MCF 10A (cell line): ENCODE measurements at regions of chr4 and their contacts with region 1.

Region 1: GRCh38 chr4:76515975-76516843 is 81.2 kb downstream of the SHROOM3 start:
- DNase-seq: no peak
- H3K4me3 Mint-ChIP-seq: no peak overlapping the region
- H3K27ac Mint-ChIP-seq: no peak overlapping the region
- H3K4me1 Mint-ChIP-seq: peaks cover 4% of the 10 kb centered on the region
- H3K27me3 Mint-ChIP-seq: no peaks in the 10 kb centered on the region
- CTCF ChIP-seq: no peak

Region 2: GRCh38 chr4:76363556-76364290 is 152.5 kb before region 1 on chr4:
- CTCF ChIA-PET with region 1: no interaction called
- POLR2A ChIA-PET with region 1: no interaction called
- intact Hi-C with region 1: no loop called
- DNase-seq: no peak
- H3K4me3 Mint-ChIP-seq: no peak overlapping the region
- H3K27ac Mint-ChIP-seq: no peak overlapping the region
- H3K4me1 Mint-ChIP-seq: peaks cover 6% of the 10 kb centered on the region
- H3K27me3 Mint-ChIP-seq: no peaks in the 10 kb centered on the region
- CTCF ChIP-seq: no peak

Region 3: GRCh38 chr4:76640353-76640910 is 124.2 kb after region 1 on chr4:
- CTCF ChIA-PET with region 1: interaction called, 3 read pairs
- POLR2A ChIA-PET with region 1: no interaction called
- intact Hi-C with region 1: loop called (anchors 5 kb)
- DNase-seq: peak; percentile 73
- H3K4me3 Mint-ChIP-seq: peak overlapping the region; percentile 70
- H3K27ac Mint-ChIP-seq: peak overlapping the region; percentile 98
- H3K4me1 Mint-ChIP-seq: peaks cover 43% of the 10 kb centered on the region
- H3K27me3 Mint-ChIP-seq: no peaks in the 10 kb centered on the region
- CTCF ChIP-seq: no peak

Region 4: GRCh38 chr4:76748649-76749048 is 232.4 kb after region 1 on chr4:
- CTCF ChIA-PET with region 1: interaction called, 6 read pairs
- POLR2A ChIA-PET with region 1: no interaction called
- intact Hi-C with region 1: loop called (anchors 1 kb)
- DNase-seq: peak; percentile 57
- H3K4me3 Mint-ChIP-seq: no peak overlapping the region
- H3K27ac Mint-ChIP-seq: no peak overlapping the region
- H3K4me1 Mint-ChIP-seq: peaks cover 25% of the 10 kb centered on the region
- H3K27me3 Mint-ChIP-seq: no peaks in the 10 kb centered on the region
- CTCF ChIP-seq: peak; percentile 7

Region 5: DNA sequence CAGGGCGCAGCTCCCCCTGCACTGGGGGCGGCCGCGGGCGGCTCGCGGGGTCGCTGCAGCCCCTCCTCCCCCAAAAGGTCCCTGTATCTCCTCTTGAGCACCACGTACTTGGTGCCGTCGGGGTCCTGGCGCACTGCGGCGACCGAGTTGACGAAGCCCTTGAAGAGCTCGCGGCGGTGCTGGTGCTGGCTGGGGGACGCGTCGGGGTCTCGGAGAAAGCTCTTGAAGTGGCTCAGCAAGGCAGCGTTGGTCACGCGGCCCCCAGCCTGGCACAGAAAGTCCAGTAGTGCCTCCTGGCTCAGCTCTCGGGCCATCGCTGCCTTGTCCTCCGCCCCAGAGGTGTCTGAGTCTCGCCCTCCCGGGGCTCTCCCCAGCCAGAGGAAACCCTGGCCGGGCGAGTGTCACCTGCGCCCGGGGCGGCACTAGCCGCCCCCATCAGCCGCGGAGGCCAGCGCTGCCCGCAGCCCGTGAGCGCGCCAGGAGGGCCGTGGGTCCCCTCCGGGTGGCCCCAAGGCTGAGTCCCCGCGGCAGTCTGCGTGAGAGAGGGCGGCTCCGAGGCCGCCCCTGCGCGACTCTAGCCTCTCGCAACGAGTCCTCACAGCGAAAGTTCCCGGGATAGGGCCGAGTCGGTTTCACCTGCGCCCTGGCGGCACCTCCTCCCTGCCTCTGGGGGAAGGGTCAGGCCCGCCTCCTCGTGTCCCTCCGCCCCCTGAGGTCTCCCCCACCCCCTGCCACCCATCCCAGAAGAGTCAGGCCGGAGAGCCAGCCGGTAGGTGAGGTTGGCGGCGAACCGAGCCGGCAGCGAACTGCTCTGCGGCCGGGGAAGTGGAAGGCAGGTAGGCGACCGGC is 381.6 kb after region 1 on chr4 and contains the start of gene SOWAHB:
- CTCF ChIA-PET with region 1: no interaction called
- POLR2A ChIA-PET with region 1: no interaction called
- intact Hi-C with region 1: no loop called
- DNase-seq: peak; percentile 52
- H3K4me3 Mint-ChIP-seq: peak within 1 kb of the TSS; percentile 53
- H3K27ac Mint-ChIP-seq: no peak within 1 kb of the TSS
- H3K4me1 Mint-ChIP-seq: peaks cover 12% of the 10 kb centered on the region
- H3K27me3 Mint-ChIP-seq: peaks cover 12% of the 10 kb centered on the region
- CTCF ChIP-seq: no peak
- total RNA-seq, gene SOWAHB: 0.12 and 0.58 TPM in 2 replicates

Region 6: GRCh38 chr4:76949276-76950051 is 433.3 kb after region 1 on chr4 and contains the start of gene SEPTIN11:
- CTCF ChIA-PET with region 1: interaction called, 3 read pairs
- POLR2A ChIA-PET with region 1: no interaction called
- intact Hi-C with region 1: loop called (anchors 1 kb)
- DNase-seq: peak; percentile 93
- H3K4me3 Mint-ChIP-seq: peak within 1 kb of the TSS; percentile 81
- H3K27ac Mint-ChIP-seq: peak within 1 kb of the TSS; percentile 76
- H3K4me1 Mint-ChIP-seq: peaks cover 28% of the 10 kb centered on the region
- H3K27me3 Mint-ChIP-seq: no peaks in the 10 kb centered on the region
- CTCF ChIP-seq: no peak
- total RNA-seq, gene SEPTIN11: 57.1 and 82.7 TPM in 2 replicates

Region 7: DNA sequence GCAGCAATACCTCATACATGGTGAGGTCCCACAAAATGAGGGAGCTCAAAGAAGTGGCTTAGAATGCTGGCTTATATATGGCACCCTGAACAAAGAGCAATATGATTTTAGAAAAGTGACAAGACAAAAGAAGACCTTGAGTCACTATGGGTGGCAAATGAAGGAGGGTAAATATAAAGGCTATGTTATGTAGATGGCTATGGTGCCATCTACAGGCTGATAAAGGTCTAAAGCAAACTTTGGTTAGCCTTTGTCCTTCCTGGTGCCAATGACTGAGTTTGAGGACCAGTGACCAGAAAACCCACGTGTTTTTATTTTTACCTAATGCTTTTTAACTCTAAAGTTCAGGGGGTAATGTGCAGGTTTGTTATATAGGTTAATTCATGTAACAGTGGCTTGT is 792.6 kb after region 1 on chr4:
- CTCF ChIA-PET with region 1: no interaction called
- POLR2A ChIA-PET with region 1: no interaction called
- intact Hi-C with region 1: loop called (anchors 2 kb)
- DNase-seq: peak; percentile 62
- H3K4me3 Mint-ChIP-seq: no peak overlapping the region
- H3K27ac Mint-ChIP-seq: no peak overlapping the region
- H3K4me1 Mint-ChIP-seq: peaks cover 7% of the 10 kb centered on the region
- H3K27me3 Mint-ChIP-seq: no peaks in the 10 kb centered on the region
- CTCF ChIP-seq: peak; percentile 52